Activated naive CD8-positive, alpha-beta T cell treated with anti-CD3 and anti-CD28 coated beads, Interleukin-2, amount 10 ng/mL, durations not matched to agents 7 days and 5 days (primary cell): ENCODE measurements at regions of chr19 and their contacts with region 1.

Region 1: DNA sequence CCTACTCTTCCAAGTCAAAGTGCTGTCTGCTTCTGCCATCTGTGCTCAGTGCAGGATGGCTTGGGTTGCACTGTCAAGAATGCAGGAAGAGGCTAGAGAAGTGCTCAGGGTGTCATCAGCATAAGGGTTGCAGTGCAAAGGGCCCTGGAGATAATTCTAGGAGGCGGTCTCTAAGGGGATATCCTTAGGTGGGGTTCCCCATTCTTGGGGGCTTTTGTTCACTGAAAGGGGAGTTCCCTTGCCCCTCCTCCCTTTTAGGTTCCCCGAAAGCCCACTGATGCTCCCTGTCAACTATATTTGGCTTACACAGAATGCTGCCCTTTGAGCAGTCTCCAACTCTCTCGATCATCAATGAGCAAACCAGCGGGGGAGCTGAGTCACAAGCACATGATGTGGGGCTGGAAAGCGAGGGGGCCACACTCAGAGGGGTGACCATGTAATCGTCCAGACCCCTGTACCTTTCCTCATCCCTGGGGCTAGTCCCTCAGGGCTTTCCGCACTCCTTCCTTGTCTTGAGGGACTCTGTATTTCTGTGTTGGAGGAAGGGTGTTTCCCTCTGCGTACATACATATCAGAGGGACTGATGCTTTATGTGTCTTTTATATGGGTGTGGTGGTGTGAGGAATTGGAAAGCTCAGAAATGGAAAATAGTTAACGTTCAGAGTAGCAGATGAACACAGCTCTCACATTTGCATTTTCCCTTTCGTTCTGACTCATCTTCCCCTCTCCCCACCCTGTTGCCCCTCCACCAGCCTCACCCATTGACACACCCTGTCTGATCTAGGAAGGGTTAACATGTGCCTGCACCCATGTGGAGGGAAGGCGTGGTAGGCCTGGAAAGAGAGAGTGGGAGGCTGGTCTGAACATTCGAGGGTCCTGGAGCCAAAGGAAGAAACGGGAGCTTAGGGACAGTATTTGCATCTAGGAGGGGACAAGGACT is 6.7 kb downstream of the ZBTB32 start:
- DNase-seq: peak; percentile 61
- ATAC-seq: peak; percentile 32
- H3K4me3 Mint-ChIP-seq: peak overlapping the region; percentile 74
- H3K27ac Mint-ChIP-seq: peak overlapping the region; percentile 97
- H3K4me1 Mint-ChIP-seq: peaks cover 47% of the 10 kb centered on the region
- H3K27me3 Mint-ChIP-seq: no peaks in the 10 kb centered on the region

Region 2: DNA sequence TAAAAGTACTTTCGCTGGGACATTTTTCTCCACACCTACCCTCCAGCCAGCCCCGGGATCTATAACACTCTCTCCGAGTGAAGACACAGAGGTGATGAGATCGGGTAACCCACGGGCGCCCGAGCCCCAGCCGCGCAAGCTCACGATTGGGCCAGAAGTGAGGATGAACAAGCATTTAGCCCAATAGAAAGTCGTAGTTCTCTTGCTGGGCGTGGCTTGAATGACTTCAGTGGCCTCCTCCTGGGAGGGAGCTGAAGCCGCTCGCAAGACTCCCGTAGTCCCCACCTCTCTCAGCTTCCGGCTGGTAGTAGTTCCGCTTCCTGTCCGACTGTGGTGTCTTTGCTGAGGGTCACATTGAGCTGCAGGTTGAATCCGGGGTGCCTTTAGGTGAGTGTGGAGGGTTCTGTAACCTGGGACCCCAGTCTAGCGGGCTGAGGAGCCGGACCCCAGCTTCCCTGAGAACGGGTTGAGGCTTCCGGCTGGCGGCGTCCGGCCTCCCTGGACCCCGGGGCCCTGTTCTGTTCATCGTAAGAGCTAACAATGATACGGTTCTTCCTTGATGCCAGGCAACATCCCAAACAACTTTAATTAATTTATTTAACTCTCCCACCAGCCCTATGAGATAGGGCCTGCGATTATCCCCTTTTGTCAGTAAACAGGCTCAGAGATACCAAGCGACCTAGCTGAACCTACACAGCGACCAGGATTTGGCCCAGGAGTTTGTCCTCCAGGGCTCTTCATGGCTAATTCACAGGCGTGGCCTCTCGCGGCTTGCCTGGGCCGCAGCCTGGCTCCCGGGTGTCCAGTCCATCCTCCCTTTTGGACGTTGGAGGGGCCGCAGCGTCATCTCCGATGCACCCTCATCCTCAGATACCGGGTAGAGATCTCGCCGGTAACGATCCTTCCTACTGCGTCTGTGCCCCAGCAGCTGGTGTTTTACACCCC is 62.8 kb before region 1 on chr19 and contains the start of gene COX6B1:
- POLR2A ChIA-PET with region 1: interaction called, 14 read pairs
- DNase-seq: peak; percentile 82
- ATAC-seq: peak; percentile 70
- H3K4me3 Mint-ChIP-seq: peak within 1 kb of the TSS; percentile 92
- H3K27ac Mint-ChIP-seq: peak within 1 kb of the TSS; percentile 90
- H3K4me1 Mint-ChIP-seq: peaks cover 38% of the 10 kb centered on the region
- H3K27me3 Mint-ChIP-seq: no peaks in the 10 kb centered on the region
- total RNA-seq, gene COX6B1: 407 to 412 TPM

Region 3: GRCh38 chr19:36214386-36215275 is 503.6 kb after region 1 on chr19 and contains the starts of genes ZNF146 and ZNF565:
- POLR2A ChIA-PET with region 1: no interaction called
- DNase-seq: peak; percentile 95
- ATAC-seq: peak; percentile 91
- H3K4me3 Mint-ChIP-seq: no peak within 1 kb of the TSS
- H3K27ac Mint-ChIP-seq: no peak within 1 kb of the TSS
- H3K4me1 Mint-ChIP-seq: peaks cover 15% of the 10 kb centered on the region
- H3K27me3 Mint-ChIP-seq: no peaks in the 10 kb centered on the region
- total RNA-seq, gene ZNF146: 71.9 to 75.1 TPM
- total RNA-seq, gene ZNF565: 4.2 to 5.2 TPM